HCT116 (cell line): ENCODE measurements at regions of chr12 and their contacts with region 1.

Region 1: DNA sequence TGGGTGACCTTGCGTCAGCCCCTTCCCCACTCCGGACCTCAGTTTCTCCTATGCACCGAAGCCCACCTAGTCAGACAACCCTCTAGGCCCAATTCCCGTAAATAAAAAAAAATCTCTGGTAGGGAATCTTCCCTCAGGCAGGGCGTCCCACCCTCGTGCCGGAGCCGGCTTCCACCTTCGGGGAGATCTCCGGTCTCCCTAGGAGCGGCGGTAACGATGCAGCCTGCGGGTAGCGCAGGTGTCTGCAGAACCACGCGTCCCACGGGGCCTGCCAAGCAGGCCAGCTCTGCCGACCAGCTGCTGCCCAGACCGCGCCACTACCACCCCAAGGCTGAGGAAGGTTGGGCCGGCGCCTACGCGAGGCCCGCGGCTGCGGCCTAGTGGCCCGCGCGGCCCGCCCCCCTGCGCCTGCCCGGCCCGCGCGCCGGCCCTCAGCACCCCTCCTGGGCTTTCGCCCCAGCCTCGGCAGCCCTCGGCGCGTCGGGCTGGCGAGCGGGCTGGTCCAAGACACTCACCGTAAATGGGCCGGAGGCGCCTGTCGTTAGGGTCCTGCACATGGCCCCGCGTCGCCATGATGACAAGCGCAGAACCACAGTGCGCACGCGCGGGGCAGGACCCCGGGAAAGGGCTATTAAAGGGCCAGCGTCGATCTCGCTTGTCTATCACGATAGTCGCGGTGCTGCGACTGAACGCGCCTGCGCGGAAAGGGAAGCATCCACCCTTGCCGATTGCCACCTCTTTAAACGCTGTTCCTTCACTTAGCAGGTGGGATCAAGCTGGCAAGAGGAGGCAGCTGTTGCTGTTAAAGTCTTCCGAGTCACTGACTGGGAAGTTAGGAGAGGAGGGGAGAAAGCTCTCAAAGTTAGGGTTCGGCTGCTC is at the start of gene NAA25:
- DNase-seq: peak; percentile 72
- ATAC-seq: peak; percentile 67
- H3K4me3 ChIP-seq: peak within 1 kb of the TSS; percentile 82 to 96
- H3K27ac ChIP-seq: peak within 1 kb of the TSS; percentile 96
- H3K4me1 ChIP-seq: peaks cover 57 to 76% of the 10 kb centered on the region in 2 experiments
- H3K27me3 ChIP-seq: no peaks in the 10 kb centered on the region
- CTCF ChIP-seq: no peak
- POLR2A ChIP-seq: peak; percentile 22
- RAD21 ChIP-seq: no peak
- total RNA-seq, gene NAA25: 56.6 TPM

Region 2: GRCh38 chr12:111798182-111798581 is 310.3 kb before region 1 on chr12:
- CTCF ChIA-PET with region 1: no interaction called
- POLR2A ChIA-PET with region 1: no interaction called
- RAD21 ChIA-PET with region 1: no interaction called
- intact Hi-C with region 1: no loop called
- DNase-seq: no peak
- ATAC-seq: no peak
- H3K4me3 ChIP-seq: no peak overlapping the region
- H3K27ac ChIP-seq: no peak overlapping the region
- H3K4me1 ChIP-seq: no peaks in the 10 kb centered on the region
- H3K27me3 ChIP-seq: no peaks in the 10 kb centered on the region
- CTCF ChIP-seq: no peak
- POLR2A ChIP-seq: no peak
- RAD21 ChIP-seq: no peak

Region 3: DNA sequence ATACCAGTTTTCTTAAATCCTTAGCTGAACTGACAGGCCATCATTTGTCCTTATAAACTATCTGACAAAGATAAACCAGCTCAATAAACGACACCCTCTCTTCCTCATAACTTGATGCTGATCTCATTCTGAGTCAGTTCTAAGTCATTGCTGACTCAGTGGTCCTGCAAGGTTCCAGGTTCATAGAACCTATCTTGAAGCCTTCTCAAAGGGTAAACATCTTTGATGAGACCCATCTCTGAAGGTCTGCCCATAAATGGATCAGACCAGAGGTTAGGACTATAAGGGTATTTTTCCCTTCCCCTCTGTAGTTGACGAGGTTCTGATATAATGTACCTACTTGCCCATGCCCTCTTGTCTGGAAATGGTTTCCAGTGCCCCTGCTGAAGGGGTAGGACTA is 11.8 kb before region 1 on chr12:
- CTCF ChIA-PET with region 1: interaction called, 3 read pairs
- POLR2A ChIA-PET with region 1: interaction called, 10 read pairs
- RAD21 ChIA-PET with region 1: interaction called in 1 of 2 experiments, 4 read pairs
- intact Hi-C with region 1: no loop called
- DNase-seq: peak; percentile 87
- ATAC-seq: peak; percentile 87
- H3K4me3 ChIP-seq: peak overlapping the region in 1 of 2 experiments; percentile 43; a peak in 2 of 4 replicates
- H3K27ac ChIP-seq: peak overlapping the region; percentile 62
- H3K4me1 ChIP-seq: peaks cover 21 to 53% of the 10 kb centered on the region in 2 experiments
- H3K27me3 ChIP-seq: no peaks in the 10 kb centered on the region
- CTCF ChIP-seq: no peak
- POLR2A ChIP-seq: no peak
- RAD21 ChIP-seq: peak; percentile 19; the same call in 1 of the 2 replicates

Region 4: DNA sequence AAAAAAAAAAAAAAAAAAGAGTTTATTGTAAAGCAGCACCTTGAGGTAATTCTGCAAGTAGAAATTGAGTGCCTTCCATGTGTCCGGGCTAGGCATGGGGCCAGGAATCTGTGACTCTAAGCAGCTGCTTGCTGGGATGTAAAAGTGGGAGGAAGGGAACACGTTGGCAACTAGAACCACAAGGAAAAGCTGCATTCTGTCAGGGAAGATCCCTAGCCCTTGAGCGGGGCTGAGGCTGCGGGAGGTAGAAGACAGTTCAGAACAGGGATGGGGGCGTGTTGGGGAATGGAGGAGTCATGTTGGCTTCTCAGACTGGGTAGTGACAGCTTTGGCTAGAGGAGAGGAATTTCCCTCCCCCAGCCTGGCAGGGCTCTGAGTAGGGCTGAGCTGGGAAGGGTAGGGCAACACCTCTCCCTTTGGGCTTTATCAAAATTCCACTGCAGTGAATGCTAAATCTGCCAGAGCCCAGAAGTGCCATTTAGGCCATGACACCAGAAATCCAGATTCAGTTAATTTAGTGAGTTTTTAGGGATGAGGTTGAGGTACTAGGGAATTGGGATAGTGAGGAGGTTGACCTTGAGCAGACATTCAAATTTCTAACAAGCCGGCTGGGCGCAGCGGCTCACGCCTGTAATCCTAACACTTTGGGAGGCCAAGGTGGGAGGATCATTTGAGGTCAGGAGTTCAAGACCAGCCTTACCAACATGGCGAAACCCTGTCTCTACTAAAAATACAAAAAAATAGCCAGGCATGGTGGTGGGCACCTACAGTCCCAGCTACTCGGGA is 13.5 kb after region 1 on chr12:
- CTCF ChIA-PET with region 1: interaction called, 3 read pairs
- POLR2A ChIA-PET with region 1: interaction called, 11 read pairs
- RAD21 ChIA-PET with region 1: interaction called, 3 read pairs
- intact Hi-C with region 1: no loop called
- DNase-seq: peak; percentile 26
- ATAC-seq: no peak
- H3K4me3 ChIP-seq: no peak overlapping the region
- H3K27ac ChIP-seq: peak overlapping the region; percentile 29
- H3K4me1 ChIP-seq: peaks cover 36 to 67% of the 10 kb centered on the region in 2 experiments
- H3K27me3 ChIP-seq: no peaks in the 10 kb centered on the region
- CTCF ChIP-seq: no peak
- POLR2A ChIP-seq: no peak
- RAD21 ChIP-seq: no peak